MCF 10A (cell line): ENCODE measurements at regions of chr13 and their contacts with region 1.

Region 1: DNA sequence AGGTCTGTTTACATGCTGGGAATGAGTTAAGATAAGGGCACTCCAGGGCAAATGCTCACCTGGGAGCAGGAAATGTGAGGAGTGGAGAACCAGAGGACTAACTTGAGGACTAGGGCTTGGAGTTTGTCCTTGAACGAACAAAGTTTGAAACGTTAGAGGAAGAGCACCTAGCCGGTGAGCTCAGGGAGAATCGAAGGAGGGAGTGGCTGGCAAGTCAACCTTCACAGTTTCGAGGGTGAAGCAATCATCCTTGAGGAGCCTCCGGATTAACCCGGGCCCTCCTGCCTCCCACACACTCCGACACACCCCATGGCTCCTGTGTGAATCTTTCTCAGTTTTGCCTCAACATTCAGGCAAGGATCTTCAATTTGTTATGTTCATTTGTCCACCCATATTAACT is 58.6 kb downstream of the LMO7 start:
- DNase-seq: peak; percentile 82
- H3K4me3 Mint-ChIP-seq: no peak overlapping the region
- H3K27ac Mint-ChIP-seq: peak overlapping the region; percentile 27
- H3K4me1 Mint-ChIP-seq: peaks cover 18% of the 10 kb centered on the region
- H3K27me3 Mint-ChIP-seq: no peaks in the 10 kb centered on the region
- CTCF ChIP-seq: no peak

Region 2: GRCh38 chr13:75495938-75496337 is 198.8 kb before region 1 on chr13:
- CTCF ChIA-PET with region 1: no interaction called
- POLR2A ChIA-PET with region 1: no interaction called
- intact Hi-C with region 1: no loop called
- DNase-seq: no peak
- H3K4me3 Mint-ChIP-seq: no peak overlapping the region
- H3K27ac Mint-ChIP-seq: no peak overlapping the region
- H3K4me1 Mint-ChIP-seq: no peaks in the 10 kb centered on the region
- H3K27me3 Mint-ChIP-seq: no peaks in the 10 kb centered on the region
- CTCF ChIP-seq: no peak

Region 3: GRCh38 chr13:75724752-75725504 is 30.2 kb after region 1 on chr13:
- CTCF ChIA-PET with region 1: interaction called, 19 read pairs
- POLR2A ChIA-PET with region 1: no interaction called
- intact Hi-C with region 1: no loop called
- DNase-seq: peak; percentile 26
- H3K4me3 Mint-ChIP-seq: no peak overlapping the region
- H3K27ac Mint-ChIP-seq: peak overlapping the region; percentile 75
- H3K4me1 Mint-ChIP-seq: peaks cover 29% of the 10 kb centered on the region
- H3K27me3 Mint-ChIP-seq: no peaks in the 10 kb centered on the region
- CTCF ChIP-seq: no peak

Region 4: GRCh38 chr13:75782985-75783384 is 88.3 kb after region 1 on chr13:
- CTCF ChIA-PET with region 1: interaction called, 31 read pairs
- POLR2A ChIA-PET with region 1: no interaction called
- intact Hi-C with region 1: loop called (anchors 5 kb)
- DNase-seq: no peak
- H3K4me3 Mint-ChIP-seq: no peak overlapping the region
- H3K27ac Mint-ChIP-seq: no peak overlapping the region
- H3K4me1 Mint-ChIP-seq: no peaks in the 10 kb centered on the region
- H3K27me3 Mint-ChIP-seq: no peaks in the 10 kb centered on the region
- CTCF ChIP-seq: no peak

Region 5: DNA sequence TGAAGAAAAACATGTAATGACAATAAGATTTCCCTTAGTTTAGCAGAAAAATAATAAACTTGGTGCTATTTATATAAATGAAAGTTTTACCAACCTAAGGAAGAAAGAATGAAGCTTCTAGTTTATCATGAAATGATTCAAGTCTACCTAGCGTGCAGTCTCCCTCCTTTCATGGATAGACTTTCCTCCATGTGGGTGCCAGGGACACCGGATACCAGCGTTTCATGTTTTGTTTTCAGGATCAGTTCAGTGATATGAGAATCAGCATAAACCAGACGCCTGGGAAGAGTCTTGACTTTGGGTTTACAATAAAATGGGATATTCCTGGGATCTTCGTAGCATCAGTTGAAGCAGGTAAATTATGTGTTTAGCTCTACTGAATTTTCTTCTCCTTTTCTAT is 138.1 kb after region 1 on chr13:
- CTCF ChIA-PET with region 1: interaction called, 26 read pairs
- POLR2A ChIA-PET with region 1: no interaction called
- intact Hi-C with region 1: no loop called
- DNase-seq: no peak
- H3K4me3 Mint-ChIP-seq: no peak overlapping the region
- H3K27ac Mint-ChIP-seq: no peak overlapping the region
- H3K4me1 Mint-ChIP-seq: no peaks in the 10 kb centered on the region
- H3K27me3 Mint-ChIP-seq: no peaks in the 10 kb centered on the region
- CTCF ChIP-seq: no peak

Region 6: DNA sequence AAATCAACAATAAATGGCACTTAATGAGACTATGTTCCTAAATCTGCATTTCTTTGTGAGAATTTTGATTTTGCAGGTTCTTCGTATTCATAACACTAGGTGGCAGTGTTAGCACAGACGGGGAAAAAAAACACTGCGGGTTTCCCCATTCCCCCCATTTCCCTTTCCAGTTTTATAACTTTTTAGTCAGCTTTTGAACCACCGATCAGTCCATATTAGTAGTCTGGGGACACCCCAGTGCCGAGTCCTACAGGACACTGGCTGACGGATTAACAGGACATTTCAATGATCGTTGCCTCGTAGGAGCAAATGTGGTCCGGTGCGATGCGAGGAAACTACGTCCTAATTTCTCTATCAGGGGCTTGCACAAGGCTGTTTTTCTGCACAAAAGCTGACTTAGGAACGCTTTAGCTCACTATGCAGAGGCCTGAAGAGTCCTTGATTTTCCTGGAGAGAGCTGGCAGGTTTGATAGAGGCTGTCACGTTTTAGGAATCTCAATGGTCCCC is 175.7 kb after region 1 on chr13:
- CTCF ChIA-PET with region 1: interaction called, 74 read pairs
- POLR2A ChIA-PET with region 1: interaction called, 8 read pairs
- intact Hi-C with region 1: loop called (anchors 1 kb)
- DNase-seq: peak; percentile 30
- H3K4me3 Mint-ChIP-seq: peak overlapping the region; percentile 77
- H3K27ac Mint-ChIP-seq: no peak overlapping the region
- H3K4me1 Mint-ChIP-seq: no peaks in the 10 kb centered on the region
- H3K27me3 Mint-ChIP-seq: no peaks in the 10 kb centered on the region
- CTCF ChIP-seq: peak; percentile 62

Region 7: GRCh38 chr13:76038920-76039716 is 344.4 kb after region 1 on chr13:
- CTCF ChIA-PET with region 1: no interaction called
- POLR2A ChIA-PET with region 1: no interaction called
- intact Hi-C with region 1: no loop called
- DNase-seq: no peak
- H3K4me3 Mint-ChIP-seq: no peak overlapping the region
- H3K27ac Mint-ChIP-seq: no peak overlapping the region
- H3K4me1 Mint-ChIP-seq: peaks cover 17% of the 10 kb centered on the region
- H3K27me3 Mint-ChIP-seq: no peaks in the 10 kb centered on the region
- CTCF ChIP-seq: no peak